ENCODE measurements at regions of chr12 and their contacts with region 1.

Region 1: DNA sequence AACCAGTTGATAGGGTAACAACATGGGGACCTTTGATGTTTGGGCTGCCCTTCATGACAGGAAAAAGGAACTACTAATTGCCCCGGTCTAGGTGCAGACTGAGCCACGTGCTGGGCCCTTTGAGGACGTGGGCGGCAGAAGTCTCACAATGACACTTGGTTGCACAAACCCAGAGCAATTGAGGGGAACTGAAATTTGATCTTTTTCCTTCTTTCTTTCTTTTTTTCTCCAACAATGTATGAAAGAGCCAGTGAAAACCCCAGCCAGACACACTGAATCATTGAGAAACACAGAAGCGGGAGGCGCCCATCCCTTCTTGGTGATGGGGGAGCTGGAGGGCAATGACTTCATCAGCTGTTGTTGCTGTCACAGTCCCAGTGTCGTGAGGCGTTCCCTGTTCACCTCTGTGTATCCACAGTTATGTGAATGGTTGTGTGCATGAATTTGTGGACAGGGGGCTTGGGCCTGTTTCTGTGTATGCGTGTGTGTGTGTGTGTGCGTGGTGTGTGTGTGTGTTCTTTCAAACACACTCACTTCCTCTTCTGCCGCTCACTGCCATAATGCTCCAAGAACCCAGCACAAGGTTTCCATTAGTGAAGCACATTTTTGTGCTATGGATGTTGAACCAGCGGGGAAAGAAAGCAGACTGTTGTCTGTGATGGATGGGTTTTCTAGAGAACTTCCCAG is 137.5 kb upstream of the CCND2 start:
- DNase-seq: peak; percentile 46
- ATAC-seq: peak; percentile 83
- H3K4me3 Mint-ChIP-seq: peak overlapping the region; percentile 47
- H3K27ac Mint-ChIP-seq: peak overlapping the region; percentile 93
- H3K4me1 Mint-ChIP-seq: peaks cover 54% of the 10 kb centered on the region
- H3K27me3 Mint-ChIP-seq: no peaks in the 10 kb centered on the region
- CTCF ChIP-seq: no peak

Region 2: DNA sequence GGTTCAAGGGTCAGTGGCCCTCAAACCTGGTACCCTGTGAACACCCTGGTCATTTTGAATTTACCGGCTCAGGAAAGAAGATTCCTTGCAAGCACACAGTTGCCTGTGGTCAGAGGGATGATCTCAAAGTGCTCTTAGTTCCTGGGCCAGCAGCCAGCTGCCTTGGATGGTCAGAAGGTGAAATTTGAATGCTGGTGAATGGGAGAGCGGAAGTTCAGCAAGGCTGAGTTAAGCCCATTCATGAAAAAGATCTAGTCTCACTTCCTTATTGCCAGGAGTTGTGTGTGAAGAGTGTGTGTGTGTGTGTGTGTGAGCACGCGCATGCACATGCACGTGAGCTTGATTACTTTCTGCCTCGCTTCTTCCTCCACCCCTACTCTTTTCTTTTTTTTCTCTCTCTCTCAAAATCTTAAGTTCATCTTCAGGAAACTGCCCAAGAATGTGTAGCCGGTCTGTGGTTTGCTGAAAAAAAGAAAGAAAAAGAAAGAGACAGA is 18.0 kb before region 1 on chr12:
- CTCF ChIA-PET with region 1: no interaction called
- POLR2A ChIA-PET with region 1: interaction called, 26 read pairs
- intact Hi-C with region 1: loop called (anchors 1 kb)
- DNase-seq: no peak
- ATAC-seq: peak; percentile 80
- H3K4me3 Mint-ChIP-seq: peak overlapping the region; percentile 69
- H3K27ac Mint-ChIP-seq: peak overlapping the region; percentile 81
- H3K4me1 Mint-ChIP-seq: peaks cover 56% of the 10 kb centered on the region
- H3K27me3 Mint-ChIP-seq: no peaks in the 10 kb centered on the region
- CTCF ChIP-seq: no peak

Measured in activated B cell treated with CpG ODN at 0.5 μM for 24 hours (primary cell).